B cell (primary cell): ENCODE measurements at regions of chr1 and their contacts with region 1.

Region 1: GRCh38 chr1:109598655-109599054 is 20.8 kb downstream of the GNAT2 start:
- DNase-seq: peak; percentile 17
- ATAC-seq: no peak
- H3K4me3 ChIP-seq: no peak overlapping the region
- H3K4me3 Mint-ChIP-seq: no peak overlapping the region
- H3K27ac ChIP-seq: no peak overlapping the region
- H3K27ac Mint-ChIP-seq: no peak overlapping the region
- H3K4me1 ChIP-seq: no peaks in the 10 kb centered on the region
- H3K4me1 Mint-ChIP-seq: no peaks in the 10 kb centered on the region
- H3K27me3 ChIP-seq: no peaks in the 10 kb centered on the region
- H3K27me3 Mint-ChIP-seq: no peaks in the 10 kb centered on the region
- CTCF ChIP-seq: no peak

Region 2: GRCh38 chr1:108780937-108781574 is 817.6 kb before region 1 on chr1:
- CTCF ChIA-PET with region 1: no interaction called
- POLR2A ChIA-PET with region 1: interaction called, 11 read pairs
- intact Hi-C with region 1: no loop called
- DNase-seq: no peak
- ATAC-seq: no peak
- H3K4me3 ChIP-seq: no peak overlapping the region
- H3K4me3 Mint-ChIP-seq: no peak overlapping the region
- H3K27ac ChIP-seq: no peak overlapping the region
- H3K27ac Mint-ChIP-seq: no peak overlapping the region
- H3K4me1 ChIP-seq: no peaks in the 10 kb centered on the region
- H3K4me1 Mint-ChIP-seq: no peaks in the 10 kb centered on the region
- H3K27me3 ChIP-seq: no peaks in the 10 kb centered on the region
- H3K27me3 Mint-ChIP-seq: no peaks in the 10 kb centered on the region
- CTCF ChIP-seq: no peak

Region 3: DNA sequence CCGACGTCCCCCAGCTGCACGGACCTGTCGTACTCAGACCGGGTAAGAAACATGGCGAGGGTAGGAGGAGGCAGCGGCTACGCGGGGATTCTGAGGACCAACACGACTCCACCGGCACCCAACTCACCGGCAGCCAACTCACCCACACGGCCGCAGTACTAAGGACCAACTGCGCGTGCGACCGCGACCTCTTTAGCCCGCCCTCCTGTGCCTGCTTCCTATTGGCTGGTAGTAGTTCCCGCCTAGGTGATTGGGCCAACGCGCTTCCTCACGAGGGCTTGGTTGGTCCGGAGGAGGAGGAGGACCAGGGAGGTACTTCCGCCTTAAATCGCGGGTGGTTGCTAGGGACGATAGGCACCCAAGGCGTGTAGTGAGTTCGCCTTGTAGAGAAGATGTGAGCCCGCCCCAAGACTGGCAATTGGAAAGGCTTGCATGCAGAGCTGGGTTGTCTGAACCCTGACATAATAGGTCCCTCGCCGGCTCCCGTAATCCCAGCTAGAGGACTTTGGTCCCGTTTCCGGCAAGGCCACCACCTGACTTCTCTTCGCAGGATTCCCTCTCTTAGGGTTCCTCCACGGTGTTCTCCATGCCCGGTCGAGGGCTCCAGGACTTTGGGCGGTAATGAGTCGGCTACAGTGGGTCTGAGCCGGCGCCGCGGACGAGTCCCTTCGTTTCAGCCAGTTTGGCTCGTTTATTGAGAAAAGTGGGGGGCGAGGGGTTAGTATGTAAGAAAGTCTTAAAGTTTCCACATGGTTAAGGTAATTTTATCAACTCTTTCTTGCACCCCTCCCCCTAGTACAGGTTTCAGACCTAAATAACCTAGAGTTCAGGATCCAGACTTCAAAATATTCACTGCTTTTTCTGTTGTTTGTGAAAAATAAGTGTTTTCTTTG is 172.1 kb before region 1 on chr1 and contains the start of gene PSMA5:
- CTCF ChIA-PET with region 1: no interaction called
- POLR2A ChIA-PET with region 1: no interaction called
- intact Hi-C with region 1: no loop called
- DNase-seq: peak; percentile 97
- ATAC-seq: peak; percentile 95
- H3K4me3 ChIP-seq: peak within 1 kb of the TSS; percentile 72 to 98 (median 79)
- H3K4me3 Mint-ChIP-seq: peak within 1 kb of the TSS; percentile 98
- H3K27ac ChIP-seq: peak within 1 kb of the TSS; percentile 71 to 82
- H3K27ac Mint-ChIP-seq: peak within 1 kb of the TSS; percentile 98
- H3K4me1 ChIP-seq: peaks cover 13 to 19% of the 10 kb centered on the region in 2 donors
- H3K4me1 Mint-ChIP-seq: peaks cover 33% of the 10 kb centered on the region
- H3K27me3 ChIP-seq: no peaks in the 10 kb centered on the region
- H3K27me3 Mint-ChIP-seq: no peaks in the 10 kb centered on the region
- CTCF ChIP-seq: no peak
- total RNA-seq, gene PSMA5: 58.3 and 62.9 TPM in 2 replicates